ENCODE measurements at regions of chr11 and their contacts with region 1.

Region 1: GRCh38 chr11:64688534-64688982 is 34.4 kb downstream of the NRXN2 start:
- H3K4me3 Mint-ChIP-seq: peak overlapping the region; percentile 33
- H3K27ac Mint-ChIP-seq: peak overlapping the region; percentile 15
- H3K4me1 Mint-ChIP-seq: peaks cover 49% of the 10 kb centered on the region
- H3K27me3 Mint-ChIP-seq: peaks cover 35% of the 10 kb centered on the region

Region 2: DNA sequence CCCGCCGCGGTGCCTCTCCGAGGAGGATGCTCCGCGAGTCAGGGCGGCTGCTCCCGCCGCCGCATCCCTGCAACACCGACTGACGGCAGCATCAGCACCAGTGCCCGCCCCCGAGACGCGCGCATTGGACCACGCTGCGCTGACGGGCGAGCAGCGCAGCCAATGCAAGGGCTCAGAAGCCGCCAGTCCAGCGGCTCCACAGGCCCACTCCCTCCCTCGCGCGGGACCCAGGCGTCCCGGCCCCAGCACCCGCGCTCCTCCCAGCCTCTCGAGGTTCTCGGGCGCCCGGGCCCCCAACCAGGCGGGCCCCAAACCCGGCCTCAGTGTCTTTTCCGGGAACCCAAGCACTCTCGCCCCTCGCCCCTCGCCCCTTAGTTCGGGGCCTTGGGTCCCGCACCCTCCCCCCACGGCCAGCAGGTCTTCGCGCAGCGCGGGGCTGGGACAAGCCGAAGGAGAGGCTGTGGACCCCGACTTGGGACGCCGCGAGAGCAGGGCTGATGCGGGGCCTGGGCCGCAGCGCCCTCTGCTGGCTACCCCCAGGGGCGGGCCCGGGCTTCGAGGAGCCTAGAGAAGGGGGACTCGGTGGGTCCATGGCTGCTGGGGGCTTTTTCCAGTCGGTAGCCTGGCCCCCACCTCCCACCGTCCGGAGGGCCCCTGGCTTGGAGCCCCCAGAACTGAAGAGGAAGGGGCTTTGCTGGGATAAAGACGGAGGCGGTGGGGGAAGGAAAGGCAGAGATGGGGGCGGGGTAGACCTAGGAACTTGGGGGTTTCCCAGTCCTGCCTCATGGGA is 34.8 kb after region 1 on chr11 and contains the start of gene NRXN2:
- intact Hi-C with region 1: loop called (anchors 1 kb)
- H3K4me3 Mint-ChIP-seq: peak within 1 kb of the TSS; percentile 71
- H3K27ac Mint-ChIP-seq: no peak within 1 kb of the TSS
- H3K4me1 Mint-ChIP-seq: peaks cover 23% of the 10 kb centered on the region
- H3K27me3 Mint-ChIP-seq: peaks cover 43% of the 10 kb centered on the region